KBM-7 (cell line): ENCODE measurements at regions of chr19 and their contacts with region 1.

Region 1: GRCh38 chr19:46495787-46496101 is at the start of gene PNMA8B:
- DNase-seq: no peak

Region 2: DNA sequence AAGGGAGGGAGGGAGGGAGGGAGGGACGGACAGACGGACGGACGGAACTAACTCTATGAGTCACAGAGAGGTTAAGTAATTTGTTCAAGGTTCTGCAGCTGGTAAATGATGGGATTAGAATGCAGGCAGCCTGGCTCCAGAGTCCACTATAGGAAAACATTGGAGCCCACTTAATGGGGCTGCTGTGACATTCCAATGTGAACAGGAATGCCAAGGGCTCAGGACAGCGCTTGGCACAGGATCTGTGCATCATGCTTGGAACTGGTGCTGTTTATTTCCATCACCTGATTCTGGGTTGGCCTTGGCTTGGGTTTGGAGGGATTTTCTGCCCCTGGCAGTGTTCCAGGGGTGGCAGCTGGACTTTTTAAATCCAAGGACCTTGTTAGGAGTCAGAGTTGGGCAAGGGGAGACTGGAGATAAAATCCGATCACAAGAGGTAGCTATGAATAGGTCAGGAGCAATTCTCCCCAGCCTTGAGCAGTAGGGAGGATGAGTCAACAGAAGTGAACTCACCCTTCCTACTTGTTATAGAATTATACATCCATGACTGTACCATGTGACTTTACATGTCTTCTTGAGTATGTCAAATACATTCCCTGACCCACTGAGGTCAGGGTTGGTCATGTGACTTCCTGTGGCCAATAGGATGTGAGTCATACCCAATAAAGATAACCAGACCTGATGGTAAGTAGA is 206.7 kb before region 1 on chr19:
- in situ Hi-C with region 1: loop called (anchors 10 kb)
- DNase-seq: peak; percentile 14

Region 3: GRCh38 chr19:46392243-46392801 is 103.4 kb before region 1 on chr19:
- in situ Hi-C with region 1: loop called (anchors 10 kb)
- DNase-seq: no peak

Region 4: DNA sequence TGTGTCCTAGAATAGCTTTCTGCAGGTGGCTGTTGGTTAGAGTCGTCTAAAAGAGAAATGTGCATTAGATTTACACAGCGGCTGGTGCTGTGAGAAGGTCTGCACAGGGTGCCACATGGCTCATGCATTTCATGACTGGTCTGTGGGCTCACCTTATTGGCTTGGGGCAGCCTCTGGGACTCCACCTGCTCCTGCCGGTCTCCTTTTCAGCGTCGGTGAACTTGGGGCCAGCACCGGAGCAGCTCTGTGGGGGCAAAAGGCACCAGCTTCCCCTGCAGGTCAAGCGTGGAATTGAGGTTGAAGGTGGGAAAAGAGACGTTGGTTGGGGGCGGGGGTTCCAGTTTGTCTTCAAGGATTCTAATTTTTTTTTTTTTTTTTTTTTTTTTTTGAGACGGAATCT is 63.9 kb before region 1 on chr19:
- in situ Hi-C with region 1: no loop called
- DNase-seq: peak; percentile 35